ENCODE measurements at regions of chr15 and their contacts with region 1.

Region 1: GRCh38 chr15:58070801-58071418 is 5.4 kb upstream of the ALDH1A2 start:
- DNase-seq: peak; percentile 69
- ATAC-seq: no peak; the same call in 1 of the 2 replicates
- H3K4me3 Mint-ChIP-seq: no peak overlapping the region
- H3K27ac Mint-ChIP-seq: no peak overlapping the region
- H3K4me1 Mint-ChIP-seq: peaks cover 9% of the 10 kb centered on the region; the same call in 1 of the 2 replicates
- H3K27me3 Mint-ChIP-seq: peaks cover 58% of the 10 kb centered on the region
- CTCF ChIP-seq: peak; percentile 85

Region 2: DNA sequence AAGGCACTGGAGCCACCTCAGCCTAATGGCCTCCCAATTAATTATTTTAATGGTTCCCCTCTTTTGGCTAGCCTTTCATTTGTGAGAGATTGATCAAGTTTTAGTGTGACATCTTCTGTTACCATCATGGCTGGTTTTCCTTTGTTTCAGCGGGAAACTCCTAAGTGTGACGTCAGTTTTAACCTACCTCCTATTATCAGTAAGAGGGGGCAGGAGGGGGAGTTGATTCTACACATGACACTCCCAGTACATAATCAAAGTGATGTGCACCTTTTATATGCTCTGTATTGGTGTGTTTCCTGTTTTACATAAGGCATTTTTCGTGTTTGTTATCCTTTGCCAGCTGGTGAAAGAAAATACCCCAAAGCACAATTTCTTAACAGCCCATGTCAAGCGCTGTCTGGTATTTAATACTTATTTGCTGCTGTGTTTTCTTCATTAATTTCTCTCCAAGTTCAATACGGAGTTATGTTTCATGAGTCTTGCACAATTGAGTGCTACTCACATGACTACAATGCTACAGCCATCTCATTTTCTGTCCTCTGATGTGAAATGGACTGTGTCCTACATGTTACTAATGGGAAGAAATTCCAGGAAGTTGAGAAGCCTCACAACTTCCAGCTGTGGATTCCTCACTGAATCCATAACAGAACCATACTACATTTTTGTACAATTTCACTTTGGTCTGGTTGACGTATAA is 416.6 kb before region 1 on chr15:
- CTCF ChIA-PET with region 1: no interaction called
- POLR2A ChIA-PET with region 1: no interaction called
- DNase-seq: no peak
- ATAC-seq: no peak
- H3K4me3 Mint-ChIP-seq: no peak overlapping the region
- H3K27ac Mint-ChIP-seq: no peak overlapping the region
- H3K4me1 Mint-ChIP-seq: no peaks in the 10 kb centered on the region
- H3K27me3 Mint-ChIP-seq: peaks cover 2% of the 10 kb centered on the region; the same call in 1 of the 2 replicates
- CTCF ChIP-seq: no peak

Region 3: DNA sequence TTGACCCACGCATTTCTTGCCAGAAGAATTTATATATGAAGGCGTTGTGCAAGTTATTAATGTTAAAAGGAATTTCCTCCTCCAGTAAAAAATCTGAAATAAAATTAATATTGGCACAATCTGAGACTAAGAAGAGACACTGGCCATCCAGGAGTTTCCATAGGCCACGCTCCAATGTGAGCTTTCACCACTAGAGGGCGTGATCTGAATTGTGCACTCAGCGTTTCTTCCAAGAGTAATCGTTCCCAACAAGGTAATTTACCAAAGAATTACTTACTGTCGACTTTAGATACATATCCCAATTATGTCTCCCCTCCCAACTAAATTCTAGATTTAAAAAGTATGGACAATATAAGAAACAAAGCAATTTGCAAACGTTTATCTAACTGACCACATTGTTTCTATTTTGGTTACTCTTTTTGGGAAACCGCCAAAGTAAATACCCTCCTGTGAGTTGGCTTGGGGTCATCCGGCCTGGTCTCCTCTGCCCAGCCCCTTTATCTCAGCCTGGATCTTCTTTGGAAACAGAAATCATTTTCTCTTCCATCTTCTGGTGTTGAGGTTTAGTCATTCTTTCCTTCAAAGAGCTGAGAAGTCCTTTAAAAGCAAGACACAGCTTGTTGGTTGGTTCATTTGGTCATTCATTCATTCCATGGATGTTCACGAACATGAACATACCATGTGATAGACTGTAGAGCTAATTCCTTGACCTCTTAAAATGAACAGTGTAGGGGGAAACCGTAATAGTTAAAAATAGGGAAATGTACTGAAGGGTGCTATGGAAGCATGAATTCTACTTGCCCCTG is 338.2 kb before region 1 on chr15:
- CTCF ChIA-PET with region 1: interaction called, 24 read pairs
- POLR2A ChIA-PET with region 1: no interaction called
- DNase-seq: peak; percentile 74
- ATAC-seq: peak; percentile 75
- H3K4me3 Mint-ChIP-seq: no peak overlapping the region
- H3K27ac Mint-ChIP-seq: no peak overlapping the region
- H3K4me1 Mint-ChIP-seq: peaks cover 15% of the 10 kb centered on the region; the same call in 1 of the 2 replicates
- H3K27me3 Mint-ChIP-seq: no peaks in the 10 kb centered on the region
- CTCF ChIP-seq: peak; percentile 82

Region 4: DNA sequence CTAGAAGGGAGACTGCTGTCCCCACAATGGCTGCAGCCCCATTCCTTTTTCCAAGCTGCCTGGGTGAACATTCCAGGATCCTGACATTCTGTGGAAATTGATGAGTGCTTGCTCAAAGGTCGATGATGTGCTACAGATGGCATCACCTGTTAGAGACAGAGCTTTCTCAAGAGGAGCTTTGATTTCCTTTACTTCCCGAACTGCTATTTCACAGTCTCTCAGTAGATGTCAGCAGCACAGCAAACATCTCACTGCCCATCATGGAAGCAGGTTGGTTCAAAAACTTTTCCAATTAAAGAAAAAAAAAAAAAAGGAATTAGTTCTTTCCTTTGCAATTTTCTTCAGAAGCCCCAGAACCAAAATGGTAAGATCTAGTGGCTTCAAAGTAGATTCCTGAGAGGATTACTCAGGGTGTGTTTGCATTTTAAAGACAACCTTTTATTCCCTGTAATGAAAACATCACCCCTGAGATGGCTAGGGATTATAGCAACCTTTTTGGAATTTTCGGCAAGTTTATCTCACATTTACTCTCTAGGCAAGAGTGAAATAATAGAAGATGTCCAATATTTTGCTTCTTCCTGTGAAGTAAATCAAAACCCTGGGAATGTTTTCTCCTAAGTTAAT is 319.6 kb before region 1 on chr15:
- CTCF ChIA-PET with region 1: interaction called, 75 read pairs
- POLR2A ChIA-PET with region 1: interaction called, 7 read pairs
- DNase-seq: no peak
- ATAC-seq: peak; percentile 48
- H3K4me3 Mint-ChIP-seq: no peak overlapping the region
- H3K27ac Mint-ChIP-seq: no peak overlapping the region
- H3K4me1 Mint-ChIP-seq: peaks cover 39% of the 10 kb centered on the region
- H3K27me3 Mint-ChIP-seq: peaks cover 4% of the 10 kb centered on the region; the same call in 1 of the 2 replicates
- CTCF ChIP-seq: no peak

Region 5: GRCh38 chr15:57861036-57861638 is 209.8 kb before region 1 on chr15:
- CTCF ChIA-PET with region 1: interaction called, 38 read pairs
- POLR2A ChIA-PET with region 1: no interaction called
- DNase-seq: no peak
- ATAC-seq: no peak; the same call in 1 of the 2 replicates
- H3K4me3 Mint-ChIP-seq: no peak overlapping the region
- H3K27ac Mint-ChIP-seq: no peak overlapping the region
- H3K4me1 Mint-ChIP-seq: no peaks in the 10 kb centered on the region
- H3K27me3 Mint-ChIP-seq: no peaks in the 10 kb centered on the region; the same call in 1 of the 2 replicates
- CTCF ChIP-seq: peak; percentile 69

Region 6: DNA sequence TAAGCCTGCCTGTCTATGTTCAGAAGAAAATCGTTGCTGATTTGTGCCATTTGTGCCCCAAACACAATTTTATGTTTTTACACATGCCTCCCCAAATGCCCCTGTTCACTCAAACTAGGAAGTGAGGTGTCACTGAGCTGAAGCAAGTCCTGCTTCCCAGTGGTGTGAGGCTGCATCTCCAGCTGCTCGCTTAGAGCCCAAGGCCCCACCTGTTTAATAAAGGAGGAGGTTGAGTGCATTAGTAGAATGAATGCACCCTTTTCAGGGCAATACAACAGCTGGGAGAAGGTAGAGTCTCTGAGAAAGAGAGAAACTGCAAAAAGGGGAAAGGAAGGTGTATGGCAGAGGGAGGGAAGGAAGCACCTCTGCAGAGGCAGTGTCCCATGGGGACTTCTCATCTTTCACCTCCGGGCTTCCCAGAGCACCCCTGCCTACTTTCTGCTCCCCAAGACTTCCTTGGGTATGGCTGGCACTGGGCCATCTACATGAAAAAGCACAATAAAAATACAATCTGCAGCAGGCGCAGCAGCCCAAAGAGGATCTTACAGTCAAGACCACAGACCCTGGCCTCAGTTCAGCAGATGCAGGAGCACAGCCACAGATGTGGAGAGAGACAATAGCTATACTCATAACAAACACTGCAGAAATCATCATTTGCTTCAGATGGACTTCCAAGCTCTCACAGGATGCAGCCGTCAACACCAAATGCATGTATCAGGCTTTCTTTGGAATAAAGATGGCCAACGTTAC is 198.5 kb before region 1 on chr15:
- CTCF ChIA-PET with region 1: interaction called, 38 read pairs
- POLR2A ChIA-PET with region 1: no interaction called
- DNase-seq: no peak
- ATAC-seq: no peak
- H3K4me3 Mint-ChIP-seq: no peak overlapping the region
- H3K27ac Mint-ChIP-seq: no peak overlapping the region
- H3K4me1 Mint-ChIP-seq: no peaks in the 10 kb centered on the region
- H3K27me3 Mint-ChIP-seq: no peaks in the 10 kb centered on the region
- CTCF ChIP-seq: no peak

Region 7: GRCh38 chr15:58052334-58052733 is 18.6 kb before region 1 on chr15:
- CTCF ChIA-PET with region 1: interaction called, 10 read pairs
- POLR2A ChIA-PET with region 1: no interaction called
- DNase-seq: no peak
- ATAC-seq: no peak
- H3K4me3 Mint-ChIP-seq: no peak overlapping the region
- H3K27ac Mint-ChIP-seq: no peak overlapping the region
- H3K4me1 Mint-ChIP-seq: peaks cover 26% of the 10 kb centered on the region
- H3K27me3 Mint-ChIP-seq: peaks cover 98% of the 10 kb centered on the region
- CTCF ChIP-seq: no peak